A549 (cell line): ENCODE measurements at regions of chr7 and their contacts with region 1.

Region 1: DNA sequence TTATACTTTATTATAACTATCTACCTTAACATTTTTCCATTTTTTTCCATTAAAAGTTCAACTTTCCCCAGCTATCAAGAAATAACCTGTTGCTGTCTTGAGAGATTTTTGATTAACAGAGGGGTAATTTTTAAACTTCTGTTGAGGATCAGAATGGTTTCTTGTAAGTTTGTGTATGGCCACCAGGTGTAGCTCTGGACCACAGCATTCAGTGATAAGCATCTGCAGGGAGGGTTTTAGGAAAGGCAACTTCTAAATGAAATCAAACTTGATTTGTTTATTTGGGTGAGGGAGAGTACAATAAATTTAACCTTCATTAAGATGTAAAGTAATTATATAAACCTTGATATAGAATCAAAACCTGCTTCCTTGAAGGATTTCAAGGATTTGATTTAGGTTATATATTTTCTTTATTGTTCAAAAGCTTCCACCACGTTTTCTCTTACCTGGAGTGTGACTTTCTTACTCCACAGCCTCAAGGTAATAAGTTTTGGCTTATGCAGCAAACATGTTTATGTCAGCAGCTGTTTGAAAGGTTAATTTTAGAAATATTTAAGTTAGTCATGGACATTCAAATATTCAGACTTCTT is 153.3 kb downstream of the STK31 start:
- DNase-seq: peak; percentile 21 to 55
- ATAC-seq: peak; percentile 76 to 85; a peak in 5 of 6 replicates
- H3K4me3 ChIP-seq: no peak overlapping the region
- H3K27ac ChIP-seq: no peak overlapping the region
- H3K4me1 ChIP-seq: peaks cover 4% of the 10 kb centered on the region; the same call in 1 of the 3 replicates
- CTCF ChIP-seq: peak; percentile 78
- EP300 ChIP-seq: no peak
- POLR2A ChIP-seq: no peak
- RAD21 ChIP-seq: peak; percentile 80 to 86

Region 2: DNA sequence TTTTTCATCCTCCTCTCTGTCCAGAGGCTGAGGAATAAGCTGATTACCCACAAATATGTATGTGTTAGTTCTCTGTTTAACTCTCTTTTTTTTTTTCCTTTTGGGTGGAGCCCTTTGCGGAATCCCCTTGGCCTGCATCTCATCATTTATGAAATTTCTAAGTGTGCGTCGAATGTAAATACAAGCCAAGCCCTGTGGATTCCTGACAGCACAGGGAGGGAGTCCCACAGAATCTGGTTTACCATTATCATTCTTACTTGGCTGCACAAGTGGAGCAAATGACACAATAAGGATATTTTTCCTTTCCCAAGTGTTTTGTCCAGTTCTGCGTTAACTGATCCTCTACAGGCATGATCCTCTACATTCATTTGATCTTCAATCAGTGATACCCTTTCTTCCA is 141.8 kb before region 1 on chr7:
- CTCF ChIA-PET with region 1: no interaction called
- POLR2A ChIA-PET with region 1: no interaction called
- DNase-seq: no peak
- ATAC-seq: no peak
- H3K4me3 ChIP-seq: no peak overlapping the region
- H3K27ac ChIP-seq: no peak overlapping the region
- H3K4me1 ChIP-seq: no peaks in the 10 kb centered on the region
- CTCF ChIP-seq: no peak
- EP300 ChIP-seq: no peak
- POLR2A ChIP-seq: no peak
- RAD21 ChIP-seq: no peak

Region 3: DNA sequence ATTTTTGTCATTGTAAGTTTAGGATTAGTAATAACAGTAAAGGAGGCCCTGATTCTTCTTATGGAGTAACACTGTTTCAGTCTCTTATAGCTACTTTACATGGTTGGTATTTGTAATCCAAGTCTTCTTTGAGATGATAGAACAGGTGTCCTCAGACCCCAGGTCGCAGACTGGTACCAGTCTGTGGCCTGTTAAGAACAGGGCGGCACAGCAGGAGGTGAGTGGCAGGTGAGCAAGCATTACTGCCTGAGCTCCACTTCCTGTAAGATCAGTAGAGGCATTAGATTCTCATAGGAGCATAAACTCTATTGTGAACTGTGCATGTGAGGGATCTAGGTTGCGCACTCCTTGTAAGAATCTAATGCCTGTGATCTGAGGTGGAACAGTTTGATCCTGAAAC is 76.0 kb before region 1 on chr7:
- CTCF ChIA-PET with region 1: no interaction called
- POLR2A ChIA-PET with region 1: no interaction called
- DNase-seq: no peak
- ATAC-seq: no peak
- H3K4me3 ChIP-seq: no peak overlapping the region
- H3K27ac ChIP-seq: no peak overlapping the region
- H3K4me1 ChIP-seq: no peaks in the 10 kb centered on the region
- CTCF ChIP-seq: no peak
- EP300 ChIP-seq: no peak
- POLR2A ChIP-seq: no peak
- RAD21 ChIP-seq: no peak

Region 4: GRCh38 chr7:23852988-23853387 is 10.3 kb before region 1 on chr7:
- CTCF ChIA-PET with region 1: interaction called, 14 read pairs
- POLR2A ChIA-PET with region 1: no interaction called
- DNase-seq: no peak
- ATAC-seq: no peak
- H3K4me3 ChIP-seq: no peak overlapping the region
- H3K27ac ChIP-seq: no peak overlapping the region
- H3K4me1 ChIP-seq: no peaks in the 10 kb centered on the region
- CTCF ChIP-seq: no peak
- EP300 ChIP-seq: no peak
- POLR2A ChIP-seq: no peak
- RAD21 ChIP-seq: no peak